ENCODE measurements at regions of chr21 and their contacts with region 1.

Region 1: DNA sequence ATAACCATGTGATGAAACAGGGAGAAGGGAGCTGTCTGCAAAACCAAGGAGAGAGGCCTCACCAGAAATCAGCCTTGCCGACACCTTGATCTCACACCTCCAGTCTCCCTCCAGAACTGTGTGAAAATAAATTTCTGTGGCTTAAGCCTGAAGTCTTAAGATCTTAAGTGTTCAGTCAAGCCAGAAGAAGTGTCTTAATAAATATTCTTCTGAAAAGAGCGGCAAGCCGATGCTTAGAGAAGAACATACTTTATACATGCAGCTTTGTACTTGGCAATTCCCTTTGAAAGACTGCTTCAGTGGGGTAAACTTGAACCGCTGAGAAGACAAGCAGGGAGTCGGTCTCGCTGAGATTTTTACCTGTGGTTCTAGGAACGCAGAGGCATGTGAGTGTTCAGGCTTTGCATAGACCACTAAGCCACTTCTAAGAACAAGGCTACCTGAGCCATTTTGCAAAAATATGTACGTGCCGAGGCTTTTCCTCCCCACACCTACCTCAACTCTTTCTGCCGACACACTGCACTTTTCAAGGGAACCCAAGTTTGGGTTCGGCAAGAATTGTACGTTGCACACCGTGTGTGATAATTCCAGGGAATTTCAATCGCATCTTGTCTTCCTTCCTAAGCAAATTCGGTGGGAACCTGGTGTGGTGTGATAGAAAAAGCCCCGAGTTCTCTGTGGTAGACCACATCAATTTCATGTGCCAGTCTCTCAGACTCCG is 3.4 kb downstream of the RUNX1 start:
- DNase-seq: peak; percentile 70
- ATAC-seq: peak; percentile 2
- H3K4me3 Mint-ChIP-seq: peak overlapping the region; percentile 91
- H3K27ac Mint-ChIP-seq: peak overlapping the region; percentile 97
- H3K4me1 Mint-ChIP-seq: peaks cover 90% of the 10 kb centered on the region
- H3K27me3 Mint-ChIP-seq: no peaks in the 10 kb centered on the region
- CTCF ChIP-seq: no peak

Region 2: DNA sequence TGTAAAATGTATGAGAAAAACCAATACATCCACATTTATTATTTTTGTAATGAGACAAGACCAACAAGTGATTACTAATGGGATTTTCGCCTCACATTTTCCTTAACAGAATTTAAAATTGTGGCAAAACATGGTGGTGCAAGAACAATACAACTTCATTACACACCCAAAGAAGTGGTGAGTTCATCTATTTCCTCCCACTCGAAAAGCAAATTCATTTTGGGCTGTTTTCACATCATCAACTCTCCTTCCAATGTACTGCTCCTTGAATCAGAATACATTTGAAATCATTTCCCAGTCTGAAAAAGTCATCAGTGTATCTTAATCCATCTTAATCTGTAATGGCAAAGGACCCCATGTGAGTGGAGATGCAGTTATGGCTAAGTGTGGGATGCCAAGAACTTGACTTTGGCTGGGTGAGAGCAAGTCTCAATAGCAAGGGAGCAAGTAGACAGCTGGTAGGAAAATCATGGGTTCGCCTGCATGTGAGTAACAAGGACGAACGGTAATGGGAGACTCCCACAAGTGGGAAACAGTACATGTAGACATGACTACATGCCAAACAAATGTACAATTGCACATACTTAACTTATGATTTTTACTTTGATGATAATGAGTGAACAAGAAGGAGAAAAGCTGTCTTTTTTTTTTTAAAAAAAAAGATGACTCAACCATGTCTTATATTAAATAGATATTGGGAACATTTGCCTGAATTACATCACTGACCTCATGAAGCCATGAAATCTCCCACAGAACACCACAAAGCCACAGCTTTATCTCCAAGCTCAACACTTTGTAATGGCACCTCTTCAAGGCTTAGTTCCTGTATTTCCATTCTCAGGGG is 42.6 kb before region 1 on chr21:
- CTCF ChIA-PET with region 1: interaction called, 10 read pairs
- POLR2A ChIA-PET with region 1: interaction called, 10 read pairs
- intact Hi-C with region 1: no loop called
- DNase-seq: no peak
- ATAC-seq: no peak
- H3K4me3 Mint-ChIP-seq: no peak overlapping the region
- H3K27ac Mint-ChIP-seq: peak overlapping the region; percentile 17
- H3K4me1 Mint-ChIP-seq: peaks cover 86% of the 10 kb centered on the region
- H3K27me3 Mint-ChIP-seq: no peaks in the 10 kb centered on the region
- CTCF ChIP-seq: no peak

Region 3: GRCh38 chr21:35026617-35027562 is 18.8 kb before region 1 on chr21:
- CTCF ChIA-PET with region 1: interaction called, 16 read pairs
- POLR2A ChIA-PET with region 1: interaction called, 100 read pairs
- intact Hi-C with region 1: loop called (anchors 2 kb)
- DNase-seq: peak; percentile 91
- ATAC-seq: peak; percentile 79
- H3K4me3 Mint-ChIP-seq: peak overlapping the region; percentile 80
- H3K27ac Mint-ChIP-seq: peak overlapping the region; percentile 97
- H3K4me1 Mint-ChIP-seq: peaks cover 80% of the 10 kb centered on the region
- H3K27me3 Mint-ChIP-seq: no peaks in the 10 kb centered on the region
- CTCF ChIP-seq: no peak

Measured in activated CD8-positive, alpha-beta T cell treated with anti-CD3 and anti-CD28 coated beads for 36 hours (primary cell).